ENCODE measurements at regions of chr7 and their contacts with region 1.

Region 1: DNA sequence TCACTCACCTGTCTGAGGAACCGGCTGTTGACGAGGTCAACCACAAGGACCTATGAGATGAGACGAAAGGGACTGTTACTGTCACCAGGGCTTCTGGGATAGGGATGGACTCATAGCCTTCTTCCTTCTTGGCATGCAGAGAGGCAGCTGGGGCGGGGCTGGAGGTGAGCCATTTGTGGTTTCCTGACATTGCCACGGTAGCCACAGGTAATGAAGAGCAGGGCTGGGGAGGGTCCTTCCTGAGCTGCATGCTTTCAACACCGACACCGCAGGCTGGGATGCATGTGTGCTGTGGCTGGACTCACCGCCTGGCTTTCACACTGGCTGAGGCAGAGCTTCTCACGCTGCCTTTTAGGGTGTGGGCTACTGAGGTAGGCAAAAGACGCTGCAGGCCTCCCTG is 46.4 kb upstream of the MKRN1 start:
- DNase-seq: peak; percentile 58

Region 2: GRCh38 chr7:140551355-140552239 is 25.9 kb after region 1 on chr7:
- intact Hi-C with region 1: loop called in 1 of 2 experiments (anchors 1 kb)
- DNase-seq: no peak

Measured in posterior vena cava (tissue), 2 donors.